Activated T-helper 1 cell treated with anti-CD3 and anti-CD28 coated beads, Interleukin-12 subunit alpha, Interleukin-12 subunit beta, Interleukin-2, Interleukin-4 antibody, amounts not matched to agents 30 ng/mL and 10 ng/mL and 1 ng/mL, durations not matched to agents 14 hours and 24 hours and 36 hours (primary cell): ENCODE measurements at regions of chr17 and their contacts with region 1.

Region 1: DNA sequence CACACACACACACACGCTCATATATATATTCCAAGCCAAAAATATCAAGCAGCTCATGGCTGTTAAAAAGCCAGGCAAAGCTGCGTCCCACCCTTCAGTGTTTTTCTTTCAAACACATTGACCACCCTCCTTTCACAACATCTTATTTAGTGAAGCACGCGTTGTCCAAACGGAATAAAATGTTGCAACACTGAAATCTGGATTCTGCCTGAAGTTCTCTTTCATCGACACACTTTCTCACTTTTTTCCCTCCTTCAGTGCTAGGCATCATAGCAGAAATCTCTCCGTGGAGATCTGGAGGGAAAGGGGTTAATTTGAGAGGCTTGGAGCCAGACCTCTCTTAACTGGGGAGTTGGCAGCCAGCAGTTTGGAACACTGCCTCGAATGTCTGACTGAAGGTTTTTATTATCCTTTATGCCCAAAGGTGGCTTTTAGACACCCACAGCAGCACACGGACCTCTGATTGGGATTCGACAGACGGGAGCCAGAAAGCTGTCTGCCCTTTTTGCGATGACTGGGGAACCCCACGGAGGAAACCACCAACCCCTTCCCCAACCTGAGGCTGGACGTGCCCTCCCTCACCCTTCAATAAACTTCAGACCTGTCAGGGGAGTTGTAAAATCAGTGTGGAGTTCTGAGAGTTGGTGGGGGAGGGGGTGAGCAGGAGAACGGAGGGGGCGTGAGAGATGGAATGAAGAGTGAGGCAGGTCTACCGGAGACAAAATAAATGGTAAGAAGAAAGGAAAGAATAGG is 833.6 kb upstream of the SOX9 start:
- DNase-seq: no peak
- H3K4me3 Mint-ChIP-seq: no peak overlapping the region
- H3K27ac Mint-ChIP-seq: no peak overlapping the region
- H3K4me1 Mint-ChIP-seq: no peaks in the 10 kb centered on the region
- H3K27me3 Mint-ChIP-seq: no peaks in the 10 kb centered on the region

Region 2: GRCh38 chr17:71224824-71225575 is 62.2 kb before region 1 on chr17:
- intact Hi-C with region 1: loop called (anchors 10 kb)
- DNase-seq: no peak
- H3K4me3 Mint-ChIP-seq: no peak overlapping the region
- H3K27ac Mint-ChIP-seq: no peak overlapping the region
- H3K4me1 Mint-ChIP-seq: no peaks in the 10 kb centered on the region
- H3K27me3 Mint-ChIP-seq: no peaks in the 10 kb centered on the region